Endothelial cell of umbilical vein (primary cell): ENCODE measurements at regions of chr7 and their contacts with region 1.

Region 1: GRCh38 chr7:130010689-130011412 is 40.3 kb downstream of the ZC3HC1 start:
- DNase-seq: peak; percentile 97
- H3K4me3 ChIP-seq: no peak overlapping the region
- H3K27ac ChIP-seq: peak overlapping the region; percentile 86
- H3K4me1 ChIP-seq: peaks cover 24% of the 10 kb centered on the region
- H3K27me3 ChIP-seq: no peaks in the 10 kb centered on the region
- CTCF ChIP-seq: peak; percentile 81 to 87
- POLR2A ChIP-seq: no peak

Region 2: DNA sequence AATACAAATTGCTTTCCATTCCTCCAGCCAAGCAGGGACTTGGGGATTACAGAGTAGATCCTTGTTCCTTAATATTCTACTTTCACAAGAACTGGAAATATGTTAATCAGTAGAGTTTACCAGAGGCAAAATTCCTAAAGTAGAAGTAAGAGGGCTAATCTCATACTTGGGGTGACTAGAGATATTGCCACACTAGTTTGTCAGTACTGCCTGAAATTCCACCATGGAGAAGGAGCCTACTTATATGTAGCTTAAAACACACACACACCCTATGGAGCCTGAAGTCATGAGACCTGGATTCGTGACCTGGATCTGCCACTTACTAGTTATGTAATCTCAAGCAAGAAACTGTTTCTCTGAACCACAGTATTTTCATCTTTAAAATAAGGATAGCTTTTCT is 542.8 kb before region 1 on chr7:
- CTCF ChIA-PET with region 1: interaction called, 3 read pairs
- POLR2A ChIA-PET with region 1: no interaction called
- dilution Hi-C with region 1: no loop called
- intact Hi-C with region 1: loop called (anchors 10 kb)
- DNase-seq: no peak
- H3K4me3 ChIP-seq: no peak overlapping the region
- H3K27ac ChIP-seq: no peak overlapping the region
- H3K4me1 ChIP-seq: no peaks in the 10 kb centered on the region
- H3K27me3 ChIP-seq: no peaks in the 10 kb centered on the region
- CTCF ChIP-seq: no peak
- POLR2A ChIP-seq: no peak

Region 3: GRCh38 chr7:129553861-129554530 is 456.9 kb before region 1 on chr7:
- CTCF ChIA-PET with region 1: no interaction called
- POLR2A ChIA-PET with region 1: no interaction called
- dilution Hi-C with region 1: no loop called
- intact Hi-C with region 1: no loop called
- DNase-seq: peak; percentile 16
- H3K4me3 ChIP-seq: no peak overlapping the region
- H3K27ac ChIP-seq: no peak overlapping the region
- H3K4me1 ChIP-seq: no peaks in the 10 kb centered on the region
- H3K27me3 ChIP-seq: peaks cover 0 to 13% of the 10 kb centered on the region in 2 experiments
- CTCF ChIP-seq: no peak
- POLR2A ChIP-seq: no peak

Region 4: GRCh38 chr7:129591868-129592267 is 419.0 kb before region 1 on chr7:
- CTCF ChIA-PET with region 1: no interaction called
- POLR2A ChIA-PET with region 1: no interaction called
- dilution Hi-C with region 1: no loop called
- intact Hi-C with region 1: no loop called
- DNase-seq: no peak
- H3K4me3 ChIP-seq: no peak overlapping the region
- H3K27ac ChIP-seq: no peak overlapping the region
- H3K4me1 ChIP-seq: no peaks in the 10 kb centered on the region
- H3K27me3 ChIP-seq: peaks cover 1 to 2% of the 10 kb centered on the region in 2 experiments
- CTCF ChIP-seq: no peak
- POLR2A ChIP-seq: no peak

Region 5: GRCh38 chr7:129664029-129665012 is 346.5 kb before region 1 on chr7:
- CTCF ChIA-PET with region 1: interaction called, 6 read pairs
- POLR2A ChIA-PET with region 1: no interaction called
- dilution Hi-C with region 1: no loop called
- intact Hi-C with region 1: loop called (anchors 1 kb)
- DNase-seq: peak; percentile 75
- H3K4me3 ChIP-seq: no peak overlapping the region
- H3K27ac ChIP-seq: no peak overlapping the region
- H3K4me1 ChIP-seq: peaks cover 7% of the 10 kb centered on the region
- H3K27me3 ChIP-seq: no peaks in the 10 kb centered on the region
- CTCF ChIP-seq: peak; percentile 33 to 43
- POLR2A ChIP-seq: no peak

Region 6: GRCh38 chr7:129875745-129876411 is 135.0 kb before region 1 on chr7:
- CTCF ChIA-PET with region 1: no interaction called
- POLR2A ChIA-PET with region 1: no interaction called
- dilution Hi-C with region 1: no loop called
- intact Hi-C with region 1: loop called (anchors 1 kb)
- DNase-seq: peak; percentile 27
- H3K4me3 ChIP-seq: peak overlapping the region in 1 of 3 experiments; percentile 27
- H3K27ac ChIP-seq: peak overlapping the region; percentile 38
- H3K4me1 ChIP-seq: peaks cover 23% of the 10 kb centered on the region
- H3K27me3 ChIP-seq: no peaks in the 10 kb centered on the region
- CTCF ChIP-seq: no peak
- POLR2A ChIP-seq: no peak

Region 7: GRCh38 chr7:129958643-129959470 is 52.0 kb before region 1 on chr7:
- CTCF ChIA-PET with region 1: interaction called, 24 read pairs
- POLR2A ChIA-PET with region 1: no interaction called
- dilution Hi-C with region 1: no loop called
- intact Hi-C with region 1: no loop called
- DNase-seq: peak; percentile 98
- H3K4me3 ChIP-seq: no peak overlapping the region
- H3K27ac ChIP-seq: peak overlapping the region; percentile 88
- H3K4me1 ChIP-seq: peaks cover 17% of the 10 kb centered on the region
- H3K27me3 ChIP-seq: no peaks in the 10 kb centered on the region
- CTCF ChIP-seq: no peak
- POLR2A ChIP-seq: peak; percentile 61